ENCODE measurements at regions of chr5 and their contacts with region 1.

Region 1: GRCh38 chr5:151093476-151093889 is 12.6 kb upstream of the TNIP1 start:
- DNase-seq: no peak
- ATAC-seq: peak; percentile 31
- H3K4me3 Mint-ChIP-seq: peak overlapping the region; percentile 58
- H3K27ac Mint-ChIP-seq: peak overlapping the region; percentile 88
- H3K4me1 Mint-ChIP-seq: peaks cover 70% of the 10 kb centered on the region
- H3K27me3 Mint-ChIP-seq: peaks cover 7% of the 10 kb centered on the region

Region 2: GRCh38 chr5:151037561-151038411 is 55.7 kb before region 1 on chr5:
- CTCF ChIA-PET with region 1: no interaction called
- POLR2A ChIA-PET with region 1: no interaction called
- DNase-seq: no peak
- ATAC-seq: no peak
- H3K4me3 Mint-ChIP-seq: no peak overlapping the region
- H3K27ac Mint-ChIP-seq: no peak overlapping the region
- H3K4me1 Mint-ChIP-seq: peaks cover 3% of the 10 kb centered on the region
- H3K27me3 Mint-ChIP-seq: no peaks in the 10 kb centered on the region

Region 3: DNA sequence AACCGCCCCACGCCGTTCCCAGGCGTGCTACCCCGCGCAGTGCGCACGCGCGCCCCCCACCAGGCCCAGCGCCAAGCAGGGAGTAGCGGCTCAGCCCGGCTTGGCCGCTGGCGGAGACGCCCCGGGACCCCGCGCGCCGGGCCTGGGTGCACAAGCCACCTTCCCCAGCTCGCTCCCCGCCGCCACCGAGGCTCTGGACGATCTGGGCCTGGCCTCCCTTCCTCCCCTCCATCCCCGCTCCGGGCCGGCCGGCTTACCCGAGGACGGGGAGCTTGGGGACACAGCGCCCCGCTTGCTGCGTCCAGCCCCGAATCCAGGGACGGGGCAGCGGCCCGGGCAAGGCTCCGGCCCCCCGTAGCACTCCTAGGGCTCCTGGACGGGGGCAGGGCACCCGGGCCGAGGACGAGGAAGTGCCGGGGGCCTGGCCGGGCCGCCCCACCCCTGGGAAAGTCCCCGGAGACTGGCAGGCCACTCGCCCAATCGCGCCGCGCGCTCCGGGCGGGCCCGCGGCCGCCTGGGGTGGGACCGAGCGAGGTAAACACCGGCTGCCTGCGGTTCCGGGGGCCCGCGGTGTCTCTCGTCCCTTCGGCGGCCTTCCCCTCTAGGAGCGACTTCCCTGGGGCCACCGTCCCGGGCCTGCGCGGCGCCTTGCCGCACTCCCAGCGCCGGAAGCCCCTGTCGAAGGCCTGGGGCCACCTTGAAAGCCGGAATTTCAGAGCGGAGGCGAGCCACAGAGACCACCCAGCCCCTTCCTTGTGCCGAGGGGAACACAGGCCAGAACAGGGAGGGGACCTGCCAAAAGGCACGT is 12.7 kb before region 1 on chr5 and contains the start of gene TNIP1:
- CTCF ChIA-PET with region 1: interaction called, 15 read pairs
- POLR2A ChIA-PET with region 1: interaction called, 15 read pairs
- DNase-seq: peak; percentile 93
- ATAC-seq: peak; percentile 91
- H3K4me3 Mint-ChIP-seq: peak within 1 kb of the TSS; percentile 85
- H3K27ac Mint-ChIP-seq: peak within 1 kb of the TSS; percentile 86
- H3K4me1 Mint-ChIP-seq: peaks cover 82% of the 10 kb centered on the region
- H3K27me3 Mint-ChIP-seq: no peaks in the 10 kb centered on the region
- total RNA-seq, gene TNIP1: 132 to 138 TPM